ENCODE measurements at regions of chr9 and their contacts with region 1.

Region 1: GRCh38 chr9:126673689-126674364 is 60.1 kb downstream of the LMX1B start:
- DNase-seq: no peak
- H3K4me3 ChIP-seq: no peak overlapping the region
- H3K27ac ChIP-seq: no peak overlapping the region
- H3K4me1 ChIP-seq: peaks cover 0 to 36% (median 0%) of the 10 kb centered on the region in 4 donors
- H3K27me3 ChIP-seq: peaks cover 0 to 86% of the 10 kb centered on the region in 2 donors
- CTCF ChIP-seq: no peak

Region 2: GRCh38 chr9:126743041-126743440 is 69.2 kb after region 1 on chr9:
- intact Hi-C with region 1: loop called (anchors 5 kb)
- DNase-seq: no peak
- H3K4me3 ChIP-seq: no peak overlapping the region
- H3K27ac ChIP-seq: no peak overlapping the region
- H3K4me1 ChIP-seq: no peaks in the 10 kb centered on the region
- H3K27me3 ChIP-seq: peaks cover 0 to 37% of the 10 kb centered on the region in 2 donors
- CTCF ChIP-seq: no peak

Region 3: GRCh38 chr9:127283917-127284316 is 610.1 kb after region 1 on chr9:
- intact Hi-C with region 1: no loop called
- DNase-seq: peak in 1 of 2 donors; percentile 59
- H3K4me3 ChIP-seq: no peak overlapping the region
- H3K27ac ChIP-seq: peak overlapping the region; percentile 11 to 34
- H3K4me1 ChIP-seq: peaks cover 0 to 42% (median 16%) of the 10 kb centered on the region in 4 donors
- H3K27me3 ChIP-seq: no peaks in the 10 kb centered on the region
- CTCF ChIP-seq: peak in 1 of 2 experiments; percentile 19

Measured in tibial artery (tissue), 4 donors.